CD4-positive, alpha-beta T cell (primary cell): ENCODE measurements at regions of chr19 and their contacts with region 1.

Region 1: DNA sequence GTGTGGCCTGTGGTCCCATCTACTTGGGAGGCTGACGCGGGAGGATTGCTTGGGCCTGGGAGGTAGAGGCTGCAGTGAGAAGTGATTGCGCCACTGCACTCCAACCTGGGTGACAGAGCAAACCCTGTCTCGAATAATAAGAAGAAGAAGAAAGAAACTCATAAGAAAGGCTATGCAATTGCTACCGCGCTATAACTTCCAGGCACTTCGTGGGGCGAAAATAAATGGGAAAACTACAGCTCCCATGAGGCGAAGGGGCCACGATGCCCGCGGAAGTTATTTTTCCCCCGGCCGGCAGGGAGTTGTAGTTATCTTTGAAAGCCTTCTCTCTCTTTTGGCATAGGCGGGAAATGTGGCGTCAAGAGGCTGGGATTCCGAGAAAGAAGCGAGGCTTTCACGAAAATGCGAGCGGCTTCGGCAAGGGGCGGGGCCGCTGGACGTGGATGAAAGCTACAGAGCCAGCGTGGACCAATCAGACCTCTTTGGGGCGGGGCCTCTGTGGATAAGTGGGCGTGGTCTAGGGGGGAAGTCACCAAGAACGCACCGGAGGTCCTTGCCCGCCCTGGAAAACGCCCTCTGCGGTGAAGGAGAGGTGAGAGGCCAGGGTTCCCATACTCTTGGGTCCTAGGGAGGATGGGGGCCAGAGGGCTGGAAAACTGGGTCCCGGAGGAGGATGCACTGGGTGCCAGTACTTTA is at the start of gene NUCB1:
- DNase-seq: peak; percentile 96 to 99 (median 99)
- ATAC-seq: peak; percentile 93
- H3K4me3 ChIP-seq: peak within 1 kb of the TSS; percentile 92
- H3K4me3 Mint-ChIP-seq: peak within 1 kb of the TSS; percentile 95
- H3K27ac ChIP-seq: peak within 1 kb of the TSS; percentile 65 to 72
- H3K27ac Mint-ChIP-seq: peak within 1 kb of the TSS; percentile 88
- H3K4me1 ChIP-seq: peaks cover 51% of the 10 kb centered on the region
- H3K4me1 Mint-ChIP-seq: peaks cover 37% of the 10 kb centered on the region
- H3K27me3 ChIP-seq: peaks cover 3 to 10% of the 10 kb centered on the region in 2 experiments
- H3K27me3 Mint-ChIP-seq: peaks cover 6% of the 10 kb centered on the region
- CTCF ChIP-seq: no peak
- total RNA-seq, gene NUCB1: 73.7 to 77.0 TPM

Region 2: GRCh38 chr19:48608798-48609263 is 291.1 kb before region 1 on chr19:
- CTCF ChIA-PET with region 1: no interaction called
- POLR2A ChIA-PET with region 1: no interaction called
- intact Hi-C with region 1: no loop called
- DNase-seq: peak in 13 of 14 experiments; percentile 35 to 82 (median 54)
- ATAC-seq: peak; percentile 93
- H3K4me3 ChIP-seq: no peak overlapping the region
- H3K4me3 Mint-ChIP-seq: no peak overlapping the region
- H3K27ac ChIP-seq: no peak overlapping the region
- H3K27ac Mint-ChIP-seq: no peak overlapping the region
- H3K4me1 ChIP-seq: peaks cover 6% of the 10 kb centered on the region
- H3K4me1 Mint-ChIP-seq: peaks cover 6% of the 10 kb centered on the region
- H3K27me3 ChIP-seq: no peaks in the 10 kb centered on the region
- H3K27me3 Mint-ChIP-seq: no peaks in the 10 kb centered on the region
- CTCF ChIP-seq: peak; percentile 69

Region 3: GRCh38 chr19:48752498-48753365 is 147.2 kb before region 1 on chr19 and contains the start of gene FUT1:
- CTCF ChIA-PET with region 1: no interaction called
- POLR2A ChIA-PET with region 1: no interaction called
- intact Hi-C with region 1: no loop called
- DNase-seq: peak in 7 of 14 experiments; percentile 10 to 64 (median 40)
- ATAC-seq: peak; percentile 69
- H3K4me3 ChIP-seq: peak within 1 kb of the TSS; percentile 47
- H3K4me3 Mint-ChIP-seq: peak within 1 kb of the TSS; percentile 81
- H3K27ac ChIP-seq: no peak within 1 kb of the TSS
- H3K27ac Mint-ChIP-seq: no peak within 1 kb of the TSS
- H3K4me1 ChIP-seq: peaks cover 24% of the 10 kb centered on the region
- H3K4me1 Mint-ChIP-seq: peaks cover 19% of the 10 kb centered on the region
- H3K27me3 ChIP-seq: peaks cover 20 to 28% of the 10 kb centered on the region in 2 experiments
- H3K27me3 Mint-ChIP-seq: peaks cover 37% of the 10 kb centered on the region
- CTCF ChIP-seq: no peak
- total RNA-seq, gene FUT1: not detected

Region 4: DNA sequence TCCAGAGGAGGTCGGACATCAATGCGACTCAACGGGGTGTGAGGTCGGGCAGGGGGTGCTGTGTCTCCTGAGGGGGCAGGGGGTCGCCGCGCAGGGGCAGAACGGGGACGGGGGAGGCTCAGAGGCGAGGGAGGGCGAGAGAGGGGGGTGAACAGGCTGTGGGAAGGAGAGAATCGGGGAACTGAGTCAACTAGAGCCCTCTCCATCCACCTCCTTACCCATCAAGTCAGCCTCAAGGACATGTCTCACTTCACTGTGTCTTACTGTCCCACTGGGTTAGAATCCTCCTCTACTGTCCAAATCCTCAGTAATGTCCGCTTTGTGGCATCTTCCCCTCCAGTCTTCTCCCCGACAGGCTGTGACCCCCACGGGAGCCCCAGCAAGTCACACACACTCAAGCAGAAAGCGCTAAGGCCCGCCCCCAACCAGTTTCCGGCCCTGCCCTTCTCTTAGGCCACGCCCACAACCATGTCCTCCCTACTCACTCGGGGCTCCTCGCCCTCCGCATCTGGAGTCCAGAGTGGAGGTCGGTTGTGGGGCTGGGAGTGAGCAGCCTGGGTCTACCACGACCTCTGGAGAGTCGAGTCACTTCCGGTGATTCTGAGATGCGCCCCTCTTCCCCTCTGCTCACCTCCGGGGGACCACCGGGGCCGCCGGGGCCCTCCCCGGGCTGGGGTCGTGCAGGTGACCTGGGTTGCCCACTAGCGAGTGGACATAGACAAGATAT is 40.8 kb before region 1 on chr19:
- CTCF ChIA-PET with region 1: no interaction called
- POLR2A ChIA-PET with region 1: interaction called, 4 read pairs
- intact Hi-C with region 1: loop called in 1 of 2 experiments (anchors 5 kb)
- DNase-seq: peak; percentile 64 to 89 (median 78)
- ATAC-seq: peak; percentile 83
- H3K4me3 ChIP-seq: peak overlapping the region; percentile 51
- H3K4me3 Mint-ChIP-seq: peak overlapping the region; percentile 95
- H3K27ac ChIP-seq: no peak overlapping the region
- H3K27ac Mint-ChIP-seq: peak overlapping the region; percentile 47
- H3K4me1 ChIP-seq: peaks cover 20% of the 10 kb centered on the region
- H3K4me1 Mint-ChIP-seq: peaks cover 5% of the 10 kb centered on the region
- H3K27me3 ChIP-seq: no peaks in the 10 kb centered on the region
- H3K27me3 Mint-ChIP-seq: no peaks in the 10 kb centered on the region
- CTCF ChIP-seq: no peak

Region 5: DNA sequence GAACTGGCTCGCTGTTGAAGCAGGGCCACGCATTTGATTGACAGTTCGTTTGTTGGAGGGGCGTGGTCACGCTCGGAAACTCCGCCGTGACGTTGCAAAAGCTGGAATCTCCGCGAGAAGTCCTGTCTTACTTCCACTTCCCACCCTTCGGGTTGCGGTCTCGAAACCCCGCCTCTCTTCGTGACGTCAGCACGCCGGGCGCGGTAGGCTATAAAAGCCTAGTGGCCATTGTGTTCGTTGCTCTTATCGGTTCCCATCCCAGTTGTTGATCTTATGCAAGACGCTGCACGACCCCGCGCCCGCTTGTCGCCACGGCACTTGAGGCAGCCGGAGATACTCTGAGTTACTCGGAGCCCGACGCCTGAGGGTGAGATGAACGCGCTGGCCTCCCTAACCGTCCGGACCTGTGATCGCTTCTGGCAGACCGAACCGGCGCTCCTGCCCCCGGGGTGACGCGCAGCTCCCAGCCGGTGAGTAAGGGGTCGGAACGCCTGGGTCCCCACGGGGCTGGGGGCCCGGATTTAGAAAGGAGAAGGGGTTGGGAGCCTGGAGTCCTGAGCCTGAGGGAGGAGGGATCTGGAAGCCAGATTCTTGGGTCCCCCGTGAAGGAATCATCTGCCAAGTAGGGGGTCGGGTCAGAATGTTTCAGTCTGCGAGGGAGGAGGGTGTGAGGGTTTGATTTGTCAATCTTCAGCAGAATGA is 27.6 kb before region 1 on chr19 and contains the start of gene PPP1R15A:
- CTCF ChIA-PET with region 1: interaction called, 3 read pairs
- POLR2A ChIA-PET with region 1: interaction called, 55 read pairs
- intact Hi-C with region 1: loop called in 1 of 2 experiments (anchors 1 kb)
- DNase-seq: peak; percentile 94 to 100 (median 99)
- ATAC-seq: peak; percentile 33
- H3K4me3 ChIP-seq: peak within 1 kb of the TSS; percentile 100
- H3K4me3 Mint-ChIP-seq: peak within 1 kb of the TSS; percentile 96
- H3K27ac ChIP-seq: peak within 1 kb of the TSS; percentile 100
- H3K27ac Mint-ChIP-seq: peak within 1 kb of the TSS; percentile 98
- H3K4me1 ChIP-seq: peaks cover 45% of the 10 kb centered on the region
- H3K4me1 Mint-ChIP-seq: peaks cover 45% of the 10 kb centered on the region
- H3K27me3 ChIP-seq: peaks cover 0 to under 1% of the 10 kb centered on the region in 2 experiments
- H3K27me3 Mint-ChIP-seq: no peaks in the 10 kb centered on the region
- CTCF ChIP-seq: no peak
- total RNA-seq, gene PPP1R15A: 569 to 584 TPM

Region 6: DNA sequence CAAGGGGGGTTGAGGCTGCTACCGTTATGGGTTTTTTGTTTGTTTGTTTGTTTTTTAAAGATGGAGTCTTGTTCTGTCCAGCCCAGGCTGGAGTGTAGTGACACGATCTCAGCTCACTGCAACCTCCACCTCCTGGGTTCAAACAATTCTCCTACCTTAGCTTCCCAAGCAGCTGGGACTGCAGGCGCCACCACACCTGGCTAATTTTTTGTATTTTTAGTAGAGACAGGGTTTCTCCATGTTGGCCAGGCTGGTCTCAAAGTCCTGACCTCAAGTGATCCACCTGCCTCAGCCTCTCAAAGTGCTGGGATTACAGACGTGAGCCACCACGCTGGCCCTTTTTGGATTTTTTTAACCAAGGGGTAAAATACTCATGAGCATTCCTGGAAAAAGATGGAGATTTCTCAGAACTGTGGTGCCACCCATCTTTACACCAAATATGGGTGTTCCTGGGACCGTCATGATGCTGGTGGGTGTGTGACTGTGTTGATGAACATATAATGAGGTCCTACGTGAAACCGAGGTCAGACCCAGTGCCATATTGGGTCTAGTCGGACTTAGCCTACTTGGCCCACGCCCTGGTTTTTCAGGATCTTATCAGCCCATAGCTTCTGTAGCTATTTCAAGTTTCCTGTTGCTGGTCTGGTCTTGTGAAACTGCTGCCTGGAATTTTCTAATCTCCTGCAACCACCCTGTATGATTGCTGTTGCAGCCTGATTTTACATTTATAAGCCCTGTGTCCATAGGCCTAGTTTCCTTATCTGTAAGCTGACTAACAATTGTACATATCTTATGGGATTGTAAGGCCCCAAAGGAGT is 21.5 kb before region 1 on chr19:
- CTCF ChIA-PET with region 1: interaction called, 3 read pairs
- POLR2A ChIA-PET with region 1: interaction called, 55 read pairs
- intact Hi-C with region 1: loop called (anchors 1 to 2 kb)
- DNase-seq: peak in 2 of 14 experiments; percentile 40 to 63
- ATAC-seq: no peak
- H3K4me3 ChIP-seq: no peak overlapping the region
- H3K4me3 Mint-ChIP-seq: no peak overlapping the region
- H3K27ac ChIP-seq: no peak overlapping the region
- H3K27ac Mint-ChIP-seq: peak overlapping the region; percentile 61
- H3K4me1 ChIP-seq: peaks cover 34% of the 10 kb centered on the region
- H3K4me1 Mint-ChIP-seq: peaks cover 34% of the 10 kb centered on the region
- H3K27me3 ChIP-seq: no peaks in the 10 kb centered on the region
- H3K27me3 Mint-ChIP-seq: no peaks in the 10 kb centered on the region
- CTCF ChIP-seq: no peak

Region 7: GRCh38 chr19:48933382-48933932 is 33.5 kb after region 1 on chr19 and contains the start of gene DHDH:
- CTCF ChIA-PET with region 1: interaction called, 3 read pairs
- POLR2A ChIA-PET with region 1: interaction called, 15 read pairs
- intact Hi-C with region 1: loop called in 1 of 2 experiments (anchors 2 kb)
- DNase-seq: peak; percentile 77 to 96 (median 86)
- ATAC-seq: peak; percentile 96
- H3K4me3 ChIP-seq: peak within 1 kb of the TSS; percentile 63
- H3K4me3 Mint-ChIP-seq: peak within 1 kb of the TSS; percentile 82
- H3K27ac ChIP-seq: peak within 1 kb of the TSS in 1 of 2 donors; percentile 25
- H3K27ac Mint-ChIP-seq: peak within 1 kb of the TSS; percentile 77
- H3K4me1 ChIP-seq: peaks cover 14% of the 10 kb centered on the region
- H3K4me1 Mint-ChIP-seq: peaks cover 20% of the 10 kb centered on the region
- H3K27me3 ChIP-seq: no peaks in the 10 kb centered on the region
- H3K27me3 Mint-ChIP-seq: no peaks in the 10 kb centered on the region
- CTCF ChIP-seq: no peak
- total RNA-seq, gene DHDH: 1.1 to 1.8 TPM